HEK293T (cell line): ENCODE measurements at regions of chr2 and their contacts with region 1.

Region 1: DNA sequence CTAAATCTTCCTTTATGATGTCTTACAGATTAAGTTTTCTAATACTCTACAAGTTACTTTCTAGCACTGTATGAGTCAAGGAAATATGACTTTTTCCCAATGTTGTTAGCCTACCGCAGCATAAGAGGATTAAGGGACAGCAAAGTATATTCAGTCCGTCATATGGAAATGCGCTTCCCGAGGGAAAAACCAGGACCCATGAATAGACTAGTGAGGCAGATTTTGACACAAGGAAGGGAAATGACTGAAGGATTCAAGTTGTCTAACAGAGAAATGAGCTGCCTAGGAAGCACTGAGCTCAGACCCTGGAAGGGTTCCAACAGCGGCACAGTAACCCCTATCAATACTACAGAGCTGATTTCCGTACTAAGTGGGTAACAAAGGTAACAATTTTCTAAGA is 12.0 kb downstream of the SEPTIN10 start:
- DNase-seq: no peak

Region 2: DNA sequence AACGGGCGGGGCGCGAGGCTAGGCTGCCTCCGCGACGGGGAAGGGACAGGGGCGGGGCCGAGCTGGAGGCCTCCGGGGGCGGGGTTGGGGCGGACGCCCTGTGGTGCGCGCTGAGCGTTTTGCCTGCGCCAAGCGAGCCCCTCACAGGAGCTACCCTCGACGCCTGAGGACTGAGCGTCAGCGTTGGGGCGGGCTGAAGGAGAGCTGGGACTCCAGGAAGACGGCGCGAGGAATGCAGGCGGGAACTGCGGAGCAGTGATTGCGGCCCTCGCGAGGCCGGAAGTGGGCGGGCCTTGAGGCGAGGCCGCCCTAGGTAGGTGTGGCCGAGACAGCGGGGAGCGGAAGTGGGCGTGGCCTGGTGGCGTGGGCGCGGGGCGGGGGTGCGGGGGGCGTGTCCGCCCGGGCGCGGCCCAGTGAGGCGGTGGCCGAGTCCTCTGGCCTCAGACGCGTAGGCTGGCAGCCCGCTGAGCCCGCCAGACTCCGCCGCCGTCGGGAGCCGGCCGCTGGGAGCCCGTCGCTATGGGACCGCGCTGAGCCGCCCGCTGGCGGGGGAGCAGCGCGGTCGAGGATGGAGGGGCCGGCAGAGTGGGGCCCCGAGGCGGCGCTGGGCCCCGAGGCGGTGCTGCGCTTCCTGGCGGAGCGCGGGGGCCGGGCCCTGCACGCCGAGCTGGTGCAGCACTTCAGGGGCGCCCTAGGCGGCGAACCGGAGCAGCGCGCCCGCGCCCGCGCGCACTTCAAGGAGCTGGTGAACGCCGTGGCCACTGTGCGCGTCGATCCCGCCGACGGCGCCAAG is 12.3 kb after region 1 on chr2 and contains the starts of genes SEPTIN10 and SOWAHC:
- CTCF ChIA-PET with region 1: no interaction called
- POLR2A ChIA-PET with region 1: interaction called, 13 read pairs
- DNase-seq: peak; percentile 91